Activated CD8-positive, alpha-beta T cell treated with anti-CD3 and anti-CD28 coated beads, Interleukin-2, amount 10 ng/mL, durations not matched to agents 7 days and 5 days (primary cell): ENCODE measurements at regions of chr4 and their contacts with region 1.

Region 1: GRCh38 chr4:53908661-53909078 is 155.7 kb downstream of the CHIC2 start:
- DNase-seq: peak; percentile 39
- ATAC-seq: peak; percentile 68
- H3K4me3 Mint-ChIP-seq: no peak overlapping the region
- H3K27ac Mint-ChIP-seq: no peak overlapping the region
- H3K4me1 Mint-ChIP-seq: peaks cover 13% of the 10 kb centered on the region
- H3K27me3 Mint-ChIP-seq: peaks cover 42% of the 10 kb centered on the region

Region 2: DNA sequence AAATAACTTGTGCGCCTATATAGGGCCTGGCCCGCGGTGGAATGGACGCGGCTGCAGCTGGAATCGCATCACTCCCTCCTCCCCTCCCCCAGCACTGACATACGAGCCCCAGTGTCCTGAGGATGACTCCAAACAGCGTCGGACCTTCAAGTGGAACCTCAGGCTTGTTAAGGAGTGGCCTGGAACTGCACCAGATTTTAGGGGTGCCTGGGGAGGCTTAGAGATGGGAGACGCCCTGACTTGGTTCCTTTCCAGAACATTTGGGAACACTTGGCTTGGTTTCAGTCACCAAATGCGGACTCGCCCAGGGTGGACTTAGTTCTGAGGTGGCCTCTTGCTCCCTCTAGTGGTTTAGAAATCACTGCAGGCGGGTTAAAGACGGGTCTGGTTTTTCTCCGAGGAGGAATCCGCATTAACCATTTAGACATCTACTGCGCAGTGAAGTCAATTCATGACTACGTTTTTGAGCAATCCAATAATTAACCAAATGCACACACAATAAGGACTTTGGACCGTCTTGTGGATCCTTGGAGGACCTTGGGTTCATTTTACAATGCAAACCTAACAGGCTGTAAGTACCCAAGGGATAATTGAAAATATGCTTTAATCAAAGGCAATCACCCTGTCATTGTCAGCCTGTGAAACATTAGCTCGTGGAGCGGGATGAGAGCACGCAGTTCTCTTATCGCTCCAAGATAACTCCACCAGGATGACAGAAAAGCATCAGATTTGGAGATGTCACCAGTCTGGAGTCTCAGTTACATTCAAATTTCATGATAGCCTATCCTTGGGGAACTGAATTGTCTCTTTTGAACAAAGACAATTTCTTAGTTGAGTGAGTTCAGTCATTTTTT is 309.2 kb after region 1 on chr4:
- CTCF ChIA-PET with region 1: interaction called, 11 read pairs
- POLR2A ChIA-PET with region 1: no interaction called
- DNase-seq: peak; percentile 68
- ATAC-seq: peak; percentile 76
- H3K4me3 Mint-ChIP-seq: no peak overlapping the region
- H3K27ac Mint-ChIP-seq: no peak overlapping the region
- H3K4me1 Mint-ChIP-seq: peaks cover 4% of the 10 kb centered on the region
- H3K27me3 Mint-ChIP-seq: peaks cover 11% of the 10 kb centered on the region